Ascending aorta (tissue), 2 donors: ENCODE measurements at regions of chr6 and their contacts with region 1.

Region 1: DNA sequence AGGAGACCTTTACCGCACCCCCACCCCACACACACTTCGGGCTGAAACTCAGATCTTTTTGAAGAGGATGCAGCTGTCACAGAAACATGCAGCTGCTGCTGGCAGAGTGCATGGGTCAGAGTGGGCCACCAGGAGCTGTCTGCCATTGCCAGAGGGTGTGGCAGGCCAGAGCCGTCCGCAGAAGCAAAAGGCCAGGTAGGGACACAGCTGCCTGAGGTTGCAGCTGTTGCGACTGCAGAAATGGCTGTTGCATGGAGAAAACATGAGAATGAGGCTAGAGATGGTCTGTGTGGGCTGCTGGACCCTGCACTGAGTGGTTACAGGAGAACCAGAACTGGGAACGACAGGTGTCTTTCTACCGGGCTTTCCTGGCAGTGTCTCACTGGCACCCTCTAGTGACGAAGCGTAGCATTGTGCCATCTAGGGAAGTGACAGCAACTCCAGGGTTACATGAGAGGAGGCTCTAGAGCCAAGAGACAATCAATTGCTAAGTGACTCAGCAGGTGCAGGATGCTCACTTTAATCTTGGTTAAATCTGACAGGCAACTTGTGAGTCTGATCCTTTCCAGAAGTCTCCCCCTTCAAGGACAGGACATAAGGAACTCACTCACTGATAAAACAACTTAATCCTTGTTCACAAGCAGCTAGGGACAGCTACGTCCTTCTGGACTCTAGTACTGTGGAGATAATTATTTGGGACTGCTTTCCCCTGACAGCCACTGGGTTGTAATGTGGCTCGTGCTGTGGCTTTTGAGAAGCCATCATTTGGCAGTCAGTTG is 29.1 kb upstream of the SERPINB9 start:
- DNase-seq: peak; percentile 58 to 92
- H3K4me3 ChIP-seq: peak overlapping the region in 1 of 2 donors; percentile 32
- H3K27ac ChIP-seq: no peak overlapping the region
- H3K4me1 ChIP-seq: no peaks in the 10 kb centered on the region
- H3K27me3 ChIP-seq: no peaks in the 10 kb centered on the region
- CTCF ChIP-seq: peak; percentile 88 to 97 (median 91)

Region 2: DNA sequence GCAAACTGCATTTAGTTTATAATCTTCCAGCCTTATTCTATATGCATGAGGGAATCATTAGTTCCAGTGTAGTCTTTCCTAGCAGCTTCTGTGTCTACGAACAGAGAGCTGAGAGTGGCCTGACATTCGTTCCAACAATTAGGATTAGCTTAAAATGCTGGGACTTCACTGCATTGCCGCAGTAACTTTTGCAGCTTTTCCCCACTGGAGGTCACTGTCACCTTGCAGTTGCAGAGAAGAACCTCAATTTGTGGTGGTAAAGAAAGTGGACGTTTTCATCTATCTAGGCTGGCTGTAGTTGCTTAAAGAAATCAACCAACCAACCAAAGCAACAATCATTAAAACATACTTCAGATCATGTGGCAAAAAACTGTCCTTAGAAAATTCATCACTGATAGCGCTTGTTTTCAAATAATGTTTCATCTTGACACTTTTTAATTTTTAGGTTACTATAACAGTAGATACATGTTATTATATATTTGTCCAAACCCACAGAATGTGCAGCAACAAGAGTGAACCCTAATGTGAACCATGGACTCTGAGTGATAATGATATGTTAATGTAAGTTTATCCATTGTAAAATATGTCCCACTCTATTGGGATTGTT is 193.7 kb before region 1 on chr6:
- intact Hi-C with region 1: loop called (anchors 2 kb)
- DNase-seq: peak in 1 of 2 donors; percentile 78
- H3K4me3 ChIP-seq: no peak overlapping the region
- H3K27ac ChIP-seq: no peak overlapping the region
- H3K4me1 ChIP-seq: peaks cover 0 to 6% of the 10 kb centered on the region in 2 donors
- H3K27me3 ChIP-seq: no peaks in the 10 kb centered on the region
- CTCF ChIP-seq: peak; percentile 64 to 74 (median 68)

Region 3: GRCh38 chr6:2848851-2849250 is 83.3 kb before region 1 on chr6:
- intact Hi-C with region 1: loop called (anchors 1 kb)
- DNase-seq: peak in 1 of 2 donors; percentile 55
- H3K4me3 ChIP-seq: no peak overlapping the region
- H3K27ac ChIP-seq: no peak overlapping the region
- H3K4me1 ChIP-seq: peaks cover 3 to 10% of the 10 kb centered on the region in 2 donors
- H3K27me3 ChIP-seq: no peaks in the 10 kb centered on the region
- CTCF ChIP-seq: no peak

Region 4: DNA sequence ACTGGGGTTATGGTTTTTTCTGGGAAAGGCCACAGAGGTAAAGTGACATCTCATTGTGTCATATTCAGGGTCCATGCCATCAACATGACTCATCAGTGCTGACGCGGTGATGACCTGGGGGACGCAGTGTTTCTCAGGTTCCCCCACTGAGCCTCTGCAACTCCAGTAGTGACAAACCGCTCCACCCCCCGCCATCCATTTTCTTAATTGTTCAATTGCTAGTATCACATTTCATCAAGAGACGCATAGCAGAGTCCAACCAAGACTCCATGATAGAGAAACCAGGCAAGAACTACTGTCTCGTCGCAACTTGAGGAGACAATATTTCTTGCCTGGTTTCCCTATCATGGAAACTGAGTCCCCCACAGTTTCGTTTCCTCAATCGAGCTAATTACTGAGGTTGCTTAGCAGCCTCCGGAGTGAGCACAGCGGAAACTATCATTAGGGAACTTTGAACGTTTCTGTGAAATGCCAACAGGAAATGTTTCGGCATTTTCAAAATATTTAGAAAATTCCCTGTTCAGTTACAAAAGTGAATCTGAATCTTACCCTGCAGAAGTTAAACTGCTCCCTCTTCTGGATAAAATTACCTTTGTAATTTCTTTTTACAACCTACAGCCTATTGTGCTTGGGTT is 78.3 kb before region 1 on chr6:
- intact Hi-C with region 1: loop called (anchors 2 kb)
- DNase-seq: peak; percentile 55 to 92
- H3K4me3 ChIP-seq: peak overlapping the region; percentile 39 to 64
- H3K27ac ChIP-seq: peak overlapping the region; percentile 81 to 88
- H3K4me1 ChIP-seq: peaks cover 7 to 10% of the 10 kb centered on the region in 2 donors
- H3K27me3 ChIP-seq: no peaks in the 10 kb centered on the region
- CTCF ChIP-seq: peak; percentile 34 to 65 (median 43)